ENCODE measurements at regions of chr18 and their contacts with region 1.

Region 1: GRCh38 chr18:46167971-46168370 is 63.8 kb downstream of the HAUS1 start:
- DNase-seq: peak; percentile 74
- ATAC-seq: peak; percentile 89
- H3K4me3 Mint-ChIP-seq: peak overlapping the region; percentile 69
- H3K27ac Mint-ChIP-seq: peak overlapping the region; percentile 86
- H3K4me1 Mint-ChIP-seq: peaks cover 59% of the 10 kb centered on the region
- H3K27me3 Mint-ChIP-seq: no peaks in the 10 kb centered on the region

Region 2: GRCh38 chr18:46155641-46156051 is 12.3 kb before region 1 on chr18:
- CTCF ChIA-PET with region 1: interaction called, 219 read pairs
- POLR2A ChIA-PET with region 1: interaction called, 21 read pairs
- DNase-seq: peak; percentile 85
- ATAC-seq: peak; percentile 89
- H3K4me3 Mint-ChIP-seq: peak overlapping the region; percentile 70
- H3K27ac Mint-ChIP-seq: peak overlapping the region; percentile 98
- H3K4me1 Mint-ChIP-seq: peaks cover 88% of the 10 kb centered on the region
- H3K27me3 Mint-ChIP-seq: no peaks in the 10 kb centered on the region